ENCODE measurements at regions of chr10 and their contacts with region 1.

Region 1: GRCh38 chr10:109914966-109915365 is 8.3 kb downstream of the XPNPEP1 start:
- DNase-seq: peak in 4 of 5 donors; percentile 29 to 64 (median 58)
- H3K4me3 ChIP-seq: peak overlapping the region; percentile 6
- H3K4me3 Mint-ChIP-seq: peak overlapping the region; percentile 0 to 80 (median 63)
- H3K27ac ChIP-seq: peak overlapping the region; percentile 21
- H3K27ac Mint-ChIP-seq: peak overlapping the region; percentile 59 to 94 (median 82)
- H3K4me1 ChIP-seq: peaks cover 81% of the 10 kb centered on the region
- H3K4me1 Mint-ChIP-seq: peaks cover 85 to 92% (median 89%) of the 10 kb centered on the region in 3 donors
- H3K27me3 ChIP-seq: no peaks in the 10 kb centered on the region
- H3K27me3 Mint-ChIP-seq: no peaks in the 10 kb centered on the region

Region 2: GRCh38 chr10:109894516-109894915 is 20.4 kb before region 1 on chr10:
- CTCF ChIA-PET with region 1: interaction called, 12 read pairs
- POLR2A ChIA-PET with region 1: interaction called, 5 read pairs
- DNase-seq: no peak
- H3K4me3 ChIP-seq: no peak overlapping the region
- H3K4me3 Mint-ChIP-seq: no peak overlapping the region
- H3K27ac ChIP-seq: no peak overlapping the region
- H3K27ac Mint-ChIP-seq: peak overlapping the region in 1 of 8 donors; percentile 55
- H3K4me1 ChIP-seq: no peaks in the 10 kb centered on the region
- H3K4me1 Mint-ChIP-seq: peaks cover 61 to 87% (median 76%) of the 10 kb centered on the region in 3 donors
- H3K27me3 ChIP-seq: no peaks in the 10 kb centered on the region
- H3K27me3 Mint-ChIP-seq: no peaks in the 10 kb centered on the region

Region 3: DNA sequence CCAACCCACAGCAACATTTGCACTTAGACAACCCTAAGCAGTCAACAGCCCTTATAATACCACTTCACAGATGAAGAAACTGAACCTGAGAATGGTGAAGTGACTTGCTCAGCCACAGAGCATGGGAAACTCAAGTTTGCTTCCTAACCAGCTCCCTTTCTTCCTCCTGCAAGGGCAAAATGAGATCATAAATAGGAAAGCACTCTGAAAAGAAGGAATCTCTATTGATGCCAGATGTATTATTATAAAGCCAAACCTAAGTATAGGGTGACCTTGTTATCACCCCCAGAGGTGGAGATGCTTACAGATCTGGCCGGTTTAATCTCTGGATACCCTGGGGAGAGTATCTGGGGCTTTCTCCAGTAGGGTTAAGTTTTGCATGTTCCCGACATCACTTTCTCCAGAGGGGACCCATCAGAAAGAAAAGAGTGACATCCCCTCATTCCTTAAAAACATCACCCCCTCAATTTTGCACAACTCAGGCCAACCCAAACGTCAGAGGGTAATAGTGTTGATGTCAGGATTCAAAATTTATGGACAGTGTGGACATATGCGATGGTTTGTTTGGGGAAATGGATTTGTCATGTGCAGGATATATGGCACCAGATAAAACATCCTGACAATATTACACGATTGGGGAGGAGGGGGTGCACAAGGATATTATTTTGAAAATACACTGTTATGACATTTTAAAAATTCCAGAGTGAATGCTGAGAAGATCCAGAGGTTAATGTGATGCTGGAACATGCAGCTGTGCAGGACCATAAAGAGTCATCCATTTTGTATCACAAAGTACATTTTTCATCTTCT is 32.4 kb after region 1 on chr10:
- CTCF ChIA-PET with region 1: no interaction called
- POLR2A ChIA-PET with region 1: no interaction called
- DNase-seq: no peak
- H3K4me3 ChIP-seq: no peak overlapping the region
- H3K4me3 Mint-ChIP-seq: no peak overlapping the region
- H3K27ac ChIP-seq: no peak overlapping the region
- H3K27ac Mint-ChIP-seq: no peak overlapping the region
- H3K4me1 ChIP-seq: peaks cover 5% of the 10 kb centered on the region
- H3K4me1 Mint-ChIP-seq: peaks cover 17 to 25% (median 18%) of the 10 kb centered on the region in 3 donors
- H3K27me3 ChIP-seq: no peaks in the 10 kb centered on the region
- H3K27me3 Mint-ChIP-seq: no peaks in the 10 kb centered on the region

Measured in CD8-positive, alpha-beta memory T cell (primary cell).